Astrocyte of the cerebellum (primary cell): ENCODE measurements at regions of chr3 and their contacts with region 1.

Region 1: GRCh38 chr3:65277798-65278197 is 590.0 kb upstream of the ADAMTS9 start:
- DNase-seq: no peak
- H3K4me3 ChIP-seq: no peak overlapping the region
- CTCF ChIP-seq: no peak

Region 2: DNA sequence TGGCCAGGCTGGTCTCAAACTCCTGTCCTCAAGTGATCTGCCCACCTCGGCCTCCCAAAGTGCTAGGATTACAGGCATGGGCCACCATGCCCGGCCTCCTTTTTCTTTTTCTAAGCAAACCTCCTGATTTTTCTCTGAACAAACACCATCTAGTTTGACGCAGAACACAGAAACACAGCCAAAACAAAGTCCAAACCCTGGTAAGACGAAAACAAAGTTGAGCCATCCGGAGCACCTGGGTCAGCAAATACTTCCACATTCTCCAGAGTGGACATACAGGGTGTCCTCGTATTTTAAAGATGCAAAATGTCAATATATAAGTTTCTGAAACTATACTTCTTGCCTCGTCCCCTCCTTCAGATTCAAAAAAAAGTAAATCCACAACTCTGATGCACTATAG is 45.1 kb after region 1 on chr3:
- in situ Hi-C with region 1: loop called (anchors 5 kb)
- DNase-seq: no peak
- H3K4me3 ChIP-seq: no peak overlapping the region
- CTCF ChIP-seq: no peak